ENCODE measurements at regions of chr2 and their contacts with region 1.

Region 1: DNA sequence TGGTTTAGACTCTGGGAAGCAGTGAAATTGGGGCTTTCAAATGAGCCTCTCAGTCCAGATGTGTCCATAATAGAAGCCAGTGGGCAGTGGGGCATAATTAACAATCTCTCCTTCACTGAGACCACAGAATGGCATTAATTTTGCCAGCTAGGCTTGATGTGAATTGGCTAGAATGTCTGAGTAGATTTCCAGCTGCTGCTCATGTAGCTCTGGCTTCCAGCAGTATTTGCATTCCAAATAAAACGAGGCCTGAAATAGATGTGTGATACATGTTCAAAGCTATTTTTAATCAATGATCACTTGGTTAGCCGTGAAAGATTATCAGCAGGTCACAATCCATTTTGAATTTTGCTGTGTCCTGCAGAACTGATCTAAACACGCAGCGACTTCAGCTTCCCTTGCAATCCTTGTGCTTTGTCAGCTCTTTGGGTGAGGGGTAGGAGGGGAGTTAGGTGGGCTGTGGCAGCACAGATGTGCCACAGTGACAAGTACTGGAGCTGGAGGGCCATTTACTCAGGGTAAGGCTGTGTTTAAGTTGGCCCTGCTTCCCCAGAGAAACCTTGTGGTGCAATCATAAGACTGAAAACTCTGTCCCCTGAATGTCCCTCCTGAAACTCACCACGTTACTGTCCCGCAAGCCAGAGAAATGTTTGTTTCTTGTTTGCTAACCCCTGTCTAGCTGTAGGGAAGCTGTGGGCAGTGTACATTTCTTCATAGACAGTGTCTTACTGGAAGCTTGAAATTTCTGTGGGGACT is 56.9 kb upstream of the TMEM178A start:
- DNase-seq: no peak
- ATAC-seq: peak; percentile 25 to 88 (median 76)
- H3K4me3 ChIP-seq: no peak overlapping the region
- H3K27ac ChIP-seq: peak overlapping the region in 9 of 10 donors; percentile 9 to 77 (median 59)
- H3K4me1 ChIP-seq: peaks cover 0 to 35% (median 10%) of the 10 kb centered on the region in 9 donors
- H3K27me3 ChIP-seq: no peaks in the 10 kb centered on the region
- CTCF ChIP-seq: no peak

Region 2: DNA sequence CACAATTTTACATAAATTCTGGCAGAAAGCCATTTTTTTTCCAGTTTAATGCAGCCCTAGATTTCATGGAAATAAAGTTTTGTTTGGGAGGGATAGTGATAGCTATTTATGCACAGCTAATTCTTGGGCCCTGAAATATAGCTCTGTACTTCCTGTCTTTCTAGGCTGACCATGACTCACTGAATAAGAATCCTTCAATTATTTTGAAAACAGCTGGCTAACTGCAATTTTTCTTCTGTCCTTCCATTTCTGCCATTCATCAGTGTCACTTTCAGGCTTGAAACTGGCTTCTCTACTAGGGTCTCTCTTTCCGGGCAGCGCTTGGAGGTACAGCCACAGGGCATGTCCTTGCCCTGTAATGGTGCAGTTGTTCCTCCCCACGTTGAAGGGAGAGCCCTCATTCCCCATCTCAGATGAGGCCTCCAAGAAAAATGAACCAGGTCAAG is 40.3 kb before region 1 on chr2:
- intact Hi-C with region 1: no loop called
- DNase-seq: no peak
- ATAC-seq: peak in 6 of 8 donors; percentile 64 to 74 (median 72)
- H3K4me3 ChIP-seq: no peak overlapping the region
- H3K27ac ChIP-seq: peak overlapping the region in 6 of 10 donors; percentile 21 to 78 (median 32)
- H3K4me1 ChIP-seq: peaks cover 4 to 50% (median 26%) of the 10 kb centered on the region in 9 donors
- H3K27me3 ChIP-seq: no peaks in the 10 kb centered on the region
- CTCF ChIP-seq: no peak

Region 3: DNA sequence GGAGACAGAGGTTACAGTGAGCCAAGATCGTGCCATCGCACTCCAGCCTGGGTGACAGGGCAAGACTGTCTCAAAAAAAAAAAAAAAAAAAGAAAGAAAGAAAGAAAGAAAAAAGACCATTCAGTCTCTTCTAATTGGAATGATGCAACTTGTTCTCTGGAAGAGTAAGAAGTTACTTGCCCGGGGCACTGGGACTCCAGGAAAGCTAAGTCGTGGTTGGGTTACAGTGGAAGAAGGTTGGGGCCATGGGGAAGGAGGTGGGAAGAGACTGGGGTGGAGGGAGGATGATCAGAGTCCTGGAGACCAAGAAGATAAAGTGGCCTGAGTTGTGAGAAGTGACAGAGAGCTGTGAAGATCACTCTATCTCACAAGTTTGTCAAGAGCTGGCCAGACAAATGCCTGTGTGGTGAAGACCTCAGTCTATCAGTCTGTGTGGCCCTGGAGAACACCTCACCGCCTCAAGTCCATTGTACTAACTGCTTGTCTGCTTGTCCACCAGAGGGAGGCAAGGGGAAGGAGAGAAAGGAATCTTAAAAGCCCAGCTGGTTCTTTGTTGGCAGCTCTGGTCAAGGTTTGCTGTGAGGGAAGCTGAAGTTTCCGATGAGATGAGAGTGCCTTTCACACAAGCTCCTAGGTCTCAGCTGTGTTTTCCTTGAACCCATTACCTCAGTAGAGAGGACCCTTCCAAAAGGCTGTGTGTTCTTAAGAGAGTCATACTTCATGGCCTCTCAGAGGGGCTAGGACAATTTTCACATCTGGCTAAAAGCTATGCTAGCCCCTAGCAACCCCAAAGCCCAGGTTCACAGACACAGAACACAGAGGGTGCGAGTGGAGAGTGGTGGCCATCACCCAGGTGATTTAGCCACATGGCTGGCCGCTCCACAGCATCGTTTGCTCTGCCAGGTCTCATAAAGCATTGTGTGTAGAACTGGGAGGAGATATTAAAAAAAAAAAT is 15.1 kb before region 1 on chr2:
- intact Hi-C with region 1: no loop called
- DNase-seq: peak in 1 of 2 donors; percentile 70
- ATAC-seq: peak; percentile 71 to 92 (median 88)
- H3K4me3 ChIP-seq: no peak overlapping the region
- H3K27ac ChIP-seq: peak overlapping the region in 1 of 10 donors; percentile 11
- H3K4me1 ChIP-seq: peaks cover 0 to 11% (median 6%) of the 10 kb centered on the region in 9 donors
- H3K27me3 ChIP-seq: no peaks in the 10 kb centered on the region
- CTCF ChIP-seq: peak; percentile 44 to 74 (median 64)

Region 4: GRCh38 chr2:39665811-39666490 is 57.1 kb after region 1 on chr2 and contains the start of gene TMEM178A:
- intact Hi-C with region 1: loop called in 1 of 10 experiments (anchors 2 kb)
- DNase-seq: no peak
- ATAC-seq: peak in 6 of 8 donors; percentile 45 to 59 (median 53)
- H3K4me3 ChIP-seq: peak within 1 kb of the TSS; percentile 40 to 86 (median 70)
- H3K27ac ChIP-seq: peak within 1 kb of the TSS in 6 of 10 donors; percentile 10 to 59 (median 44)
- H3K4me1 ChIP-seq: peaks cover 0 to 19% (median 11%) of the 10 kb centered on the region in 9 donors
- H3K27me3 ChIP-seq: peaks cover 0 to 60% (median 0%) of the 10 kb centered on the region in 7 donors
- CTCF ChIP-seq: peak in 1 of 9 donors; percentile 9
- total RNA-seq, gene TMEM178A: 0.97 to 4.8 (median 2.5) TPM